ENCODE measurements at regions of chrX and their contacts with region 1.

Region 1: DNA sequence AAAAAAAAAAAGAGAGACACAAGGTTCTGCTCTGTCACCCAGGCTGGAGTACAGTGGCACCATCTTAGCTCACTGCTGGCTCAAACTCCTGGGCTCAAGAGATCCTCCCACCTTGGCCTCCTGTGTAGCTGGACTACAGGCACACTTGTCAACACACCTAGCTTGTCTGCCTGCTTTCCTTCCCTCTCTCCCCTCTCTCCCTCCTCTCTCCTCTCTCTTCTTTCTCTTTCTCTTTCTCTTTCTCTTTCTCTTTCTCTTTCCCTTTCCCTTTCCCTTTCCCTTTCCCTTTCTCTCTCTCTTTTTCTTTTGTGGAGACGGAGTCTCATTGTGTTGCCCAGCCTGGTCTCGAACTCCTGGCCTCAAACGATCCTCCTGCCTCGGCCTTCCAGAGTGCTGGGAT is 132.1 kb downstream of the DIPK2B start:
- DNase-seq: no peak
- ATAC-seq: no peak
- H3K4me3 ChIP-seq: no peak overlapping the region
- H3K27ac ChIP-seq: no peak overlapping the region
- H3K4me1 ChIP-seq: no peaks in the 10 kb centered on the region
- H3K27me3 ChIP-seq: no peaks in the 10 kb centered on the region

Region 2: DNA sequence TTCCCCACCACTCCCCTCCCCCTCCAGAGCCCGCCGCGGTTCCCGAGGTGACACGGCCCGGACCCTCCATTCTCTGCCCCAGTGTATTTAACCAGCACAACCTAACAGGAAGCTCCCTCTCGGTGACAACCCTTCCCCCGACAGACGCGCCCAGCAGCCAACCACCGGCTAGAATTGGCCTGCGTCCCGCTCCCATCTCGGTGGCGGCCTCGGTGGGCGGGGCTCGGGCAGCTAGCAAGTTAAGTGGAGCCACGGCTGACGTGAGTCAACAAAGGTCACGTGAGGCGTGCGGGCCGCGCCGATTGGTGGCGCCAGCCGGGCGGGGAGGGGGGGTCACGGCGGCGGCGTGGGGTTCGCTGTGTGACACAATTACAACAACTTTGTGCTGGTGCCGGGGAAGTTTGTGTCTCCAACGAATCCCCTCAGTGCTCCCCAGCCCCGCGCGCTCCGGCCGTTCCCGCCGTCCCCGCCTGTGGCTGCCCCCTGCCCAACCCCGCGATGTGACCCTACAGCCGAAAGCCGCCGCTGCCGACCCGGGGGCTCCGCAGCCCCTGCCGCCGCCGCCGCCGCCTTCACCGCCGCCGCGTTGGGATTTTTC is 195.7 kb before region 1 on chrX and contains the start of gene KDM6A:
- intact Hi-C with region 1: loop called (anchors 5 to 10 kb)
- DNase-seq: peak; percentile 100
- ATAC-seq: peak; percentile 97
- H3K4me3 ChIP-seq: peak within 1 kb of the TSS; percentile 81 to 97
- H3K27ac ChIP-seq: peak within 1 kb of the TSS; percentile 46 to 79
- H3K4me1 ChIP-seq: no peaks in the 10 kb centered on the region
- H3K27me3 ChIP-seq: no peaks in the 10 kb centered on the region
- total RNA-seq, gene KDM6A: 31.7 to 42.3 TPM

Region 3: GRCh38 chrX:45035084-45035483 is 33.5 kb before region 1 on chrX:
- intact Hi-C with region 1: no loop called
- DNase-seq: no peak
- ATAC-seq: no peak
- H3K4me3 ChIP-seq: no peak overlapping the region
- H3K27ac ChIP-seq: no peak overlapping the region
- H3K4me1 ChIP-seq: no peaks in the 10 kb centered on the region
- H3K27me3 ChIP-seq: no peaks in the 10 kb centered on the region